Activated CD4-positive, alpha-beta T cell treated with anti-CD3 and anti-CD28 coated beads for 36 hours (primary cell): ENCODE measurements at regions of chr1 and their contacts with region 1.

Region 1: DNA sequence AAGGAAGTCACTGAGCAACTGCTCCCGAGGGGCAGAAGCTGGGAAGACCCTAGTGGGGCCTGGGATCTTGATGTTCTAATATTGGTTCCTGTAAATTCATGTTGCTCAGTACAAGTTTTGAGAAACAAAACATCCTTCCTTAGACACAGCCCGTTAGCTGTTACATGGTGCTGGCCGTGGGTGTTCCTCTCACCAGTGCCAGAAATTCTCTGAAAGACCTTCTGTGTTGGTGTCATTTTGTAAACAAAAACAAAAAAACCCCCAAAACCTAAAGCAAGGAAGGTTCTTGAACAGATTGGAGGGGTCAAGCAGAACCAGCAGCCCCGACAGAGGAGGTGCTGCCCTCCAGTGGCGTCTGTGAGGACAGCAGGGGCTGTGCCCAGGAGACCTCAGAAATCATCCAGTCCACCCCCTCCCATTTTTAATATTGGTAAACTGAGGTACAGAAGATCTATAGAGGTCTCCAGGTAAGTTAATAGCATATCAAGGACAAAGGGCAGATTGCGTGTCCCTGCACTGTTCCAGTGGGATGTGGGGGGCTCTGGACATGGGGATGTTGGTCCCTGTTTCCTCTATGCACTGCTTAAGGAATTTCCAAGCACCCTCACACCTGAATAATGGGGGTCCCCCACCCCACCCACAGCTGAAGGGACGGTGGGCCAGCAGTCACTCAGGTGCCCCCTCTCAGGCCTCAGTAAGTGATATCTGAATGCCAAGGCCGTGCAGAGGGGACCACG is 38.2 kb downstream of the SLC2A7 start:
- DNase-seq: peak; percentile 82
- ATAC-seq: peak; percentile 77
- H3K4me3 Mint-ChIP-seq: no peak overlapping the region
- H3K27ac Mint-ChIP-seq: peak overlapping the region; percentile 65
- H3K4me1 Mint-ChIP-seq: peaks cover 18% of the 10 kb centered on the region
- H3K27me3 Mint-ChIP-seq: no peaks in the 10 kb centered on the region

Region 2: GRCh38 chr1:8873506-8874229 is 114.4 kb before region 1 on chr1:
- CTCF ChIA-PET with region 1: interaction called, 3 read pairs
- POLR2A ChIA-PET with region 1: no interaction called
- intact Hi-C with region 1: loop called (anchors 5 kb)
- DNase-seq: peak; percentile 92
- ATAC-seq: peak; percentile 68
- H3K4me3 Mint-ChIP-seq: peak overlapping the region; percentile 90
- H3K27ac Mint-ChIP-seq: peak overlapping the region; percentile 99
- H3K4me1 Mint-ChIP-seq: peaks cover 69% of the 10 kb centered on the region
- H3K27me3 Mint-ChIP-seq: no peaks in the 10 kb centered on the region

Region 3: GRCh38 chr1:8910914-8911313 is 77.1 kb before region 1 on chr1:
- CTCF ChIA-PET with region 1: interaction called, 27 read pairs
- POLR2A ChIA-PET with region 1: no interaction called
- intact Hi-C with region 1: no loop called
- DNase-seq: no peak
- ATAC-seq: peak; percentile 36
- H3K4me3 Mint-ChIP-seq: no peak overlapping the region
- H3K27ac Mint-ChIP-seq: no peak overlapping the region
- H3K4me1 Mint-ChIP-seq: peaks cover 2% of the 10 kb centered on the region
- H3K27me3 Mint-ChIP-seq: no peaks in the 10 kb centered on the region

Region 4: DNA sequence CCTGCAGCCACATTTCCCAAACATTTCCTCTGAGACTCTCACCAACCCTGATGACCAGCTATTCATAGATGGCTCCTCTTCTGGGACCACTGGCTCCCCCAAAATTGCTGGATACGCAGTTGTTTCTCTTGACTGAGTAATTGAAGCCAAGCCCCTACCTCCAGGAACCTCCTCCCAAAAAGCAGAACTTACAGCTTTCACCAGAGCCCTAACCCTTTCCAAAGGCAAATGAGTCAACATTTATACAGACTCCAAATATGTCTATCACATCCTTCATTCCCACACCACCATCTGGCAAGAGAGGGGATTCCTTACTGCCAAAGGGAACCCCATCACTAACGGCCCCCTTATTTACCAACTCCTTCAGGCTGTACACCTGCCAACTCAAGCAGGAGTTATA is 62.6 kb before region 1 on chr1:
- CTCF ChIA-PET with region 1: interaction called, 28 read pairs
- POLR2A ChIA-PET with region 1: no interaction called
- intact Hi-C with region 1: no loop called
- DNase-seq: no peak
- ATAC-seq: no peak
- H3K4me3 Mint-ChIP-seq: no peak overlapping the region
- H3K27ac Mint-ChIP-seq: no peak overlapping the region
- H3K4me1 Mint-ChIP-seq: peaks cover 6% of the 10 kb centered on the region
- H3K27me3 Mint-ChIP-seq: no peaks in the 10 kb centered on the region

Region 5: GRCh38 chr1:8962812-8963530 is 25.1 kb before region 1 on chr1:
- CTCF ChIA-PET with region 1: interaction called, 30 read pairs
- POLR2A ChIA-PET with region 1: no interaction called
- intact Hi-C with region 1: loop called in 1 of 2 experiments (anchors 2 kb)
- DNase-seq: peak; percentile 67
- ATAC-seq: peak; percentile 57
- H3K4me3 Mint-ChIP-seq: no peak overlapping the region
- H3K27ac Mint-ChIP-seq: peak overlapping the region; percentile 27
- H3K4me1 Mint-ChIP-seq: peaks cover 47% of the 10 kb centered on the region
- H3K27me3 Mint-ChIP-seq: no peaks in the 10 kb centered on the region

Region 6: GRCh38 chr1:8970870-8971337 is 17.1 kb before region 1 on chr1:
- CTCF ChIA-PET with region 1: interaction called, 10 read pairs
- POLR2A ChIA-PET with region 1: no interaction called
- intact Hi-C with region 1: no loop called
- DNase-seq: peak; percentile 74
- ATAC-seq: peak; percentile 94
- H3K4me3 Mint-ChIP-seq: peak overlapping the region; percentile 72
- H3K27ac Mint-ChIP-seq: peak overlapping the region; percentile 84
- H3K4me1 Mint-ChIP-seq: peaks cover 39% of the 10 kb centered on the region
- H3K27me3 Mint-ChIP-seq: no peaks in the 10 kb centered on the region